ENCODE measurements at regions of chr7 and their contacts with region 1.

Region 1: GRCh38 chr7:25389489-25390106 is 161.3 kb upstream of the NPVF start:
- DNase-seq: no peak
- H3K4me3 ChIP-seq: no peak overlapping the region
- H3K27ac ChIP-seq: no peak overlapping the region
- H3K4me1 ChIP-seq: peaks cover 4% of the 10 kb centered on the region
- H3K27me3 ChIP-seq: no peaks in the 10 kb centered on the region
- CTCF ChIP-seq: peak; percentile 60 to 86 (median 68)
- POLR2A ChIP-seq: no peak

Region 2: GRCh38 chr7:24545215-24545614 is 844.4 kb before region 1 on chr7:
- intact Hi-C with region 1: no loop called
- DNase-seq: no peak
- H3K4me3 ChIP-seq: no peak overlapping the region
- H3K27ac ChIP-seq: no peak overlapping the region
- H3K4me1 ChIP-seq: no peaks in the 10 kb centered on the region
- H3K27me3 ChIP-seq: no peaks in the 10 kb centered on the region
- CTCF ChIP-seq: no peak
- POLR2A ChIP-seq: no peak

Region 3: DNA sequence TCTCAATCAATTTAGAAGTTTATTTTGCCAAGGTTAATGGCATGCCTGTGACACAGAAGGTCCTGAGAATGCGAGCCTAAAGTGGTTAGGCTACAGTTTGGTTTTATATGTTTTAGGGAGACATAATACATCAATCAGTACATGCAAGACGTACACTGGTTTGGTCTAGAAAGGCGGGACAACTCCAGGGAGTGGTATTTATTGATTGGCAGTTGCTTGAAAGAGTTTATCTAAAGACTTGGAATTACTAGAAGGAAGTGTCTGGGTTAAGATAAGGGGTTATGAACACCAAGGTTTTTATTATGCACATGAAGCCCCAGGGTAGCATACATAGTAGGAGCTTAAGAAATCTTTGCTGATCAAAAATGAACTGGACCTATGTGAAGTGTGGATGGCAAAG is 182.8 kb before region 1 on chr7:
- intact Hi-C with region 1: no loop called
- DNase-seq: no peak
- H3K4me3 ChIP-seq: no peak overlapping the region
- H3K27ac ChIP-seq: no peak overlapping the region
- H3K4me1 ChIP-seq: no peaks in the 10 kb centered on the region
- H3K27me3 ChIP-seq: no peaks in the 10 kb centered on the region
- CTCF ChIP-seq: no peak
- POLR2A ChIP-seq: no peak

Region 4: GRCh38 chr7:25259587-25260243 is 129.9 kb before region 1 on chr7:
- intact Hi-C with region 1: loop called (anchors 2 kb)
- DNase-seq: peak; percentile 50
- H3K4me3 ChIP-seq: no peak overlapping the region
- H3K27ac ChIP-seq: no peak overlapping the region
- H3K4me1 ChIP-seq: no peaks in the 10 kb centered on the region
- H3K27me3 ChIP-seq: no peaks in the 10 kb centered on the region
- CTCF ChIP-seq: peak; percentile 70 to 89 (median 79)
- POLR2A ChIP-seq: no peak

Region 5: DNA sequence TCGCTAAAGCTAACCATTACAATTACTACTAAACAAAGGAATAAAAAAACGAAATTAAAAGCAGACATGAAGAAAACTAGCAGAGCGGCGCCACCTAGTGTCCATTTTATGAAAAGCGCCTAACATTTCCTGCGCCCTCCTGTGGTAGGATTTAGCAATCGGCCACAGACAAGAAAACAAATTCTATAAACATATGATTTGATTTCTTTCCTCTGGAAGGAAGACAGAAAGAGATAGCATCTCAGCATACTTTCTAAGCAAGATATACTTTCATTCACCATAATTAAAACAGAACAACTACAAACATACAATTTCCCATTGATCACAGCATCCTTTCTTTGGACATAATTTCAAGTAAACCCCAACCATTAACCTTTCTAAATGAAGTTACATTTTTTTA is 176.4 kb after region 1 on chr7:
- intact Hi-C with region 1: loop called (anchors 2 kb)
- DNase-seq: peak; percentile 40
- H3K4me3 ChIP-seq: no peak overlapping the region
- H3K27ac ChIP-seq: no peak overlapping the region
- H3K4me1 ChIP-seq: no peaks in the 10 kb centered on the region
- H3K27me3 ChIP-seq: no peaks in the 10 kb centered on the region
- CTCF ChIP-seq: peak; percentile 99 to 100 (median 99)
- POLR2A ChIP-seq: no peak